ENCODE measurements at regions of chr7 and their contacts with region 1.

Region 1: GRCh38 chr7:121107923-121108498 is 119.5 kb downstream of the CPED1 start:
- DNase-seq: no peak
- ATAC-seq: peak; percentile 82
- H3K4me3 Mint-ChIP-seq: no peak overlapping the region
- H3K27ac Mint-ChIP-seq: no peak overlapping the region
- H3K4me1 Mint-ChIP-seq: no peaks in the 10 kb centered on the region
- H3K27me3 Mint-ChIP-seq: peaks cover 13% of the 10 kb centered on the region

Region 2: GRCh38 chr7:121081327-121081936 is 26.6 kb before region 1 on chr7:
- CTCF ChIA-PET with region 1: interaction called, 11 read pairs
- POLR2A ChIA-PET with region 1: no interaction called
- DNase-seq: no peak
- ATAC-seq: no peak
- H3K4me3 Mint-ChIP-seq: no peak overlapping the region
- H3K27ac Mint-ChIP-seq: no peak overlapping the region
- H3K4me1 Mint-ChIP-seq: no peaks in the 10 kb centered on the region
- H3K27me3 Mint-ChIP-seq: peaks cover 8% of the 10 kb centered on the region

Region 3: DNA sequence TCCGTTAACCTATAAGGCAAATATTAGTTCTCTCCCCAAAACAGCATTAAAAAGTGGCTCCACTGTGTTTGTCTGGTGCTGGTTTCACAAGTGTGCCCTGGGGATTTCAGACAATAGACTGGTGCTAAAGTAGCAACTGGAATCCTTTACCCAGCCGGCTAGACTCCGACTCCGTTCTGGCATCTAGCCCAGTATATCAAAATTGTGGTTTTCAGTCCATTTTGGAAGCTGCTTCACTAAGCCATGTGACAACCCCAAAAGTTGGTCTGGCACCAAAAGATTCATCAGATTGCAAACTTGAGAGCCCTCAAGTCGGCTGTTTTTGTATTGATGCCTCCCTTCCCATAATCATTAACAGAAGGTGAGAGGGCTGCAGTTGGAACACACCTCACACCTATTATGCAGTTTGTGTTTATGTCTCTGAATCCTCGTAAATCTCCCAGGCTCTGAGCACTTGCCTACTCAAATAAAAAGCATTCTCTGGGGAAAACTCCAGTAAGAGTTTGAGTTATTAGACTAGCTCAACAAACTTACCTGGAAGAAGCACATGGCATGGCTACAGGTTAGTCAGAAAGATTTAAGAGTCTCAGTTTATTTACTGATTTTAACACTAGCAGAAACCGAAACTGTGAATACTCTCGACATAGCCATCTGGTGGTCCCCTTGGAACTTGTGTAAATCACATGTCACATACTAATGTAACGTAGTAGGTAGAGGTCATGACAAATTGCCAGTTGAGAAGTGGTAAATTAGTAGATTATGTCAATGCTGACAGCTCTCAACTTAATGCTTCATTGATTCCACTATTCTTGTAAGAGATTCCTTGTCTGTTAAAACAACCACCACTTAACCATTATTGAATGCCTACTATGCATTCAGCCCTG is 206.0 kb after region 1 on chr7:
- CTCF ChIA-PET with region 1: no interaction called
- POLR2A ChIA-PET with region 1: no interaction called
- DNase-seq: no peak
- ATAC-seq: no peak
- H3K4me3 Mint-ChIP-seq: no peak overlapping the region
- H3K27ac Mint-ChIP-seq: no peak overlapping the region
- H3K4me1 Mint-ChIP-seq: no peaks in the 10 kb centered on the region
- H3K27me3 Mint-ChIP-seq: peaks cover 9% of the 10 kb centered on the region

Measured in activated CD8-positive, alpha-beta T cell treated with anti-CD3 and anti-CD28 coated beads, Interleukin-2, amount 10 ng/mL, durations not matched to agents 7 days and 5 days (primary cell).